Activated CD4-positive, alpha-beta memory T cell treated with anti-CD3 and anti-CD28 coated beads, Interleukin-2, amount 10 ng/mL, durations not matched to agents 7 days and 5 days (primary cell): ENCODE measurements at regions of chr17 and their contacts with region 1.

Region 1: DNA sequence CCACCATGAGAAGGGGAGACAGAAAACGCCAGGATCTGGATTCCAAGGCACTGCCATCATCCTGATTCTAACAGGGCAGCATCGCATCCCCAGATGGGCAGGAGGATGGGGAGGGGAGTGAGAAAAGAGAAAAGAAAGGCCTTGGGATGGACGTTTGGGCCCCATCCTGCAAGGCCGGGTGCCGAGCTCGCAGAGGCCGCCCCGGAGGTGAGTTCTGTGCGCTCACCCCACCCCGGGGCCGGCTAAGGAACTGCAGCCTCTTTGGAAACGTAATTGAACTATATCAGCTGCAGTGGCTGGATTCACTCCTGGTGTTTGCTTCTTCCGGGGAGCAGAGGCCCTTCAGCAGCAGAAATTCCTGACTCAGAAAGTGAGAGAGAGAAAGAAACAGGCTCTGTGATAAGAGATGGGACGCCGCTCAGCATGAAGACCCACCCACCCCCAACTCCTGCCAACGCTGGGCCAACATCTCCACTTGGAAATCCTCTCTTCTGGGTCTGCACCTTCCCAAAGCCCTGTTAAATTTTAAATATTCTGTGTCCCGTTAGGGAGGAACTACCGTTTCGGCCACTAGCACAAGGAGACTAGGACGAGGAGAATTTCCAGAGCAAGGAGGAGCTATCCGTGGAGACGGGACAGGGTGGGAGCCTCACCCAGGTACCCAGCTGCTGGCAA is 8.5 kb upstream of the SSTR2 start:
- DNase-seq: peak; percentile 64
- H3K4me3 Mint-ChIP-seq: no peak overlapping the region
- H3K27ac Mint-ChIP-seq: no peak overlapping the region
- H3K4me1 Mint-ChIP-seq: peaks cover 11% of the 10 kb centered on the region
- H3K27me3 Mint-ChIP-seq: peaks cover 16% of the 10 kb centered on the region

Region 2: DNA sequence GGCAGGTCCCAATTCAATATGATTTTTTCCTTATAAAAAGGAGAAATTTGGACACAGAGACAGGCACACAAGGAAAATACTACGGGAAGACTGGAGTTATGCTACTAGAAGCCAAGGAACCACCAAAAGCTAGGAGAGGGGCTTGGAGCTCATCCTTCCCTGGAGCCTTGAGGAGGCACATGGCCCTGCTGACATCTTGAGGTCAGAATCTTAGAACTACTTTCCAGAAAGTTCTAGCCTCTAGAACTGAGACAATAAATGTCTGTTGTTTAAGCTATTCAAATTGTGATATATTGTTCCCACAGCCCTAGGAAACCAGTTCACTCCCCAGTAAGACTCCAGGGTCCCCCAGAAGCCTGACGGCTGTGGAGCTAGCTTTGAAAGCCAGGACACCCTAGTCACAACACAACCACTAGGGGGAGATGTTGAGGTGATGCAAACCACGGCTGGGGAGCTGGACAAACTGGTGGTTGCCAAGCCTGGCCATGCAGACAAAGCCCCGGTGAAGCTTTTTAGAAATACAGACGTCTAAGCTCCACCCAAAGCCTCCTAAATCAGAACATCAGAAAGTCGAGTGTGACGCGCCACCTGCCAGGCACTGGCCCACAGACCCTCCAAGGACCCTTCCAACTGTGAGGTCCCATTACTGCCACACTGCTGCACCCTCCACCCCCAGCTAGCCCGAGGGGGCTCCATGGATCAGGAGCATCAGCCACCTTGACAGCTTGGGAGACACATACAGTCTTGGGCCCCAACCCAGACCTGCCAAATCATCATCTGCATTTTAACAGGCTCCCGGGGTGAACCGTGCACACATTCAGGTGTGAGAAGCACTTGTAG is 170.2 kb before region 1 on chr17:
- CTCF ChIA-PET with region 1: interaction called, 31 read pairs
- POLR2A ChIA-PET with region 1: no interaction called
- DNase-seq: peak; percentile 62
- H3K4me3 Mint-ChIP-seq: no peak overlapping the region
- H3K27ac Mint-ChIP-seq: no peak overlapping the region
- H3K4me1 Mint-ChIP-seq: peaks cover 1% of the 10 kb centered on the region
- H3K27me3 Mint-ChIP-seq: no peaks in the 10 kb centered on the region